ENCODE measurements at regions of chr1 and their contacts with region 1.

Region 1: GRCh38 chr1:41830726-41831125 is 88.0 kb downstream of the HIVEP3 start:
- DNase-seq: no peak
- ATAC-seq: no peak

Region 2: GRCh38 chr1:42035830-42036604 is 205.3 kb after region 1 on chr1:
- intact Hi-C with region 1: loop called (anchors 10 kb)
- DNase-seq: peak; percentile 98
- ATAC-seq: peak; percentile 97

Measured in Right ventricle myocardium superior (tissue), 1 donor.